ENCODE measurements at regions of chr1 and their contacts with region 1.

Region 1: DNA sequence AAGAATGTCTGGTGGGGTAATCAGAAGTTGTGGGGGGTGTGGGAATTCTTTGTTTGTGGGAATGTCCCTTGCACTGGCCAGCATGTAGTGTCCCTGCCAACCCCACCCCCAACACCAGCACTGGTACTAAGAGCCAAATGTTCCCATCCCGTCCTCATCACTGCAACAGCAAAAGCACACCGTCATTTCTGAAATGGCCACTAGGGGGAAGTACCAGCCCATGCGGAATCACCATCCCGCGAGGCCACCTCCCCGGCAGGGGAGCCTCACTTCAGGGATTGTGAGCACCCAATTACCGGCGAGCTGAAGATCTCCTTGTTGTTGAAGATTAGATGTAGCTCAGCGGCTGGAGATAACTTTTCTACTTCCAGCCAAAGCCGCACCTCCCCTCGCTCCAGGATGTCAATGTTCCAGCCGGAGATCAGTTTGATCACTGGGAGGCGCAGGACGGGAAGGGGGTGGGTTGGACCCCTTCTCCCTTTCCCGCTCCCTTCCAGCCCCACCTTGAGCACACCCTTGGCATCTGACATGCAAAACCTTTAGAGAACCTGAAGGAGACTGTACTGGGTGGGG is 41.0 kb downstream of the MYOM3 start:
- DNase-seq: peak; percentile 39
- H3K4me3 ChIP-seq: no peak overlapping the region
- H3K27ac ChIP-seq: no peak overlapping the region
- H3K27me3 ChIP-seq: peaks cover 6% of the 10 kb centered on the region
- CTCF ChIP-seq: peak; percentile 94

Region 2: DNA sequence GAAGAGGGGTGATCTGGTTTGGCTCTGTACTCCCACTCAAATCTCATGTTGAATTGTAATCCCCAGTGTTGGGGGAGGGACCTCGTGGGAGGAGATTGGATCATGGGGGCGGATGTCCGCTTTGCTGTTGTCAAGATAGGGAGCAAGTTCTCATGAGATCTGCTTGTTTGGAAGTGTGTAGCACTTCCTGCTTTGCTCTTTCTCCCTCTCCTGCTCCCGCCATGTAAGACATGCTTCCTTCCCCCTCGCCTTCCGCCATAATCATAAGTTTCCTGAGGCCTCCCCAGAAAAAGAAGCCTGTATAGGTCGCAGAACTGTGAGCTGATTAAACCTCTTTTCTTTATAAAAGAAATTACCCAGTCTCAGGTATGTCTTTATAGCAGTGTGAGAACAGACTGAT is 13.1 kb after region 1 on chr1:
- CTCF ChIA-PET with region 1: interaction called, 11 read pairs
- POLR2A ChIA-PET with region 1: no interaction called
- DNase-seq: no peak
- H3K4me3 ChIP-seq: no peak overlapping the region
- H3K27ac ChIP-seq: no peak overlapping the region
- H3K27me3 ChIP-seq: peaks cover 51% of the 10 kb centered on the region
- CTCF ChIP-seq: no peak

Measured in AG04450 (cell line).